CD8-positive, alpha-beta T cell (primary cell): ENCODE measurements at regions of chrX and their contacts with region 1.

Region 1: DNA sequence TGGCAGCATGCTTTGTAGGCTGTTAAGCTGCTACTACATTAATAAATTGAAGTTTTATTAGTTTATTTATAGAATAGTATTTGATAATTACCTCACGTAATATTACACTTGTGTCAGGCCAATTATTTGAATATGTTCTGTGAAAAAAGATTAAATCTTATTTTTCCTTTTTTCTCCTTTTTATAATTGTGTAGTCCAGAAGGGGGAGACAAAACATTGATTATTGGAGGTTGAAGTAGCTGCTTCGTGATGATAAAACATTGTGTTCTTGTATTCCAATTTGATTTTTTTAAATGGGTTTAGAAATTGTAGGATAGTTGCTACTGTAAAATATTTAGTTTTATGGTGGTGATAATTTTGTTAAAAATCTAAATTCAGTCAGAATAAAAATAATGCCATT is 85.7 kb downstream of the DIAPH2 start:
- DNase-seq: peak in 2 of 9 experiments; percentile 2 to 5
- ATAC-seq: no peak
- H3K4me3 ChIP-seq: no peak overlapping the region
- H3K4me3 Mint-ChIP-seq: no peak overlapping the region
- H3K27ac ChIP-seq: no peak overlapping the region
- H3K27ac Mint-ChIP-seq: no peak overlapping the region
- H3K4me1 ChIP-seq: no peaks in the 10 kb centered on the region
- H3K4me1 Mint-ChIP-seq: no peaks in the 10 kb centered on the region
- H3K27me3 ChIP-seq: no peaks in the 10 kb centered on the region
- H3K27me3 Mint-ChIP-seq: no peaks in the 10 kb centered on the region
- CTCF ChIP-seq: peak; percentile 40

Region 2: DNA sequence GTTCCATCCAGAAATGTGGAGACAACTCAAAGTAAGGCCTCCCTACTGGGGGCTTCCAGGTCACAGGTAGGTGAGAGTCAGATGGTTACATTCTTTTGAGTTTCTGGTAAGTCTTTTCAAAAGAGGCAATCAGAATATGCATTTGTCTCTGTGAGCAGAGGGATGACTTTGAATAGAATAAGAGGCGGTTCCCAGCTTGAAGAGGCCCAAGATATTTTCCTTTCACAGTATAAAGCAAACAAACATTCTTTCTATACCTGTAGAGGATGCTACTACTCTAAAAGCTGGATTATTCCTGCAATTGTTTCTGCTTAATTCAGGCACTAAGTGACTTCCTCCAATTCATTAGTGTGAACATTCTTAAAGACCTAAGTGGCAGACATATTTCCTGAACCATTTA is 41.3 kb before region 1 on chrX:
- CTCF ChIA-PET with region 1: no interaction called
- POLR2A ChIA-PET with region 1: no interaction called
- intact Hi-C with region 1: no loop called
- DNase-seq: no peak
- ATAC-seq: no peak
- H3K4me3 ChIP-seq: no peak overlapping the region
- H3K4me3 Mint-ChIP-seq: no peak overlapping the region
- H3K27ac ChIP-seq: no peak overlapping the region
- H3K27ac Mint-ChIP-seq: no peak overlapping the region
- H3K4me1 ChIP-seq: no peaks in the 10 kb centered on the region
- H3K4me1 Mint-ChIP-seq: no peaks in the 10 kb centered on the region
- H3K27me3 ChIP-seq: no peaks in the 10 kb centered on the region
- H3K27me3 Mint-ChIP-seq: no peaks in the 10 kb centered on the region
- CTCF ChIP-seq: no peak

Region 3: DNA sequence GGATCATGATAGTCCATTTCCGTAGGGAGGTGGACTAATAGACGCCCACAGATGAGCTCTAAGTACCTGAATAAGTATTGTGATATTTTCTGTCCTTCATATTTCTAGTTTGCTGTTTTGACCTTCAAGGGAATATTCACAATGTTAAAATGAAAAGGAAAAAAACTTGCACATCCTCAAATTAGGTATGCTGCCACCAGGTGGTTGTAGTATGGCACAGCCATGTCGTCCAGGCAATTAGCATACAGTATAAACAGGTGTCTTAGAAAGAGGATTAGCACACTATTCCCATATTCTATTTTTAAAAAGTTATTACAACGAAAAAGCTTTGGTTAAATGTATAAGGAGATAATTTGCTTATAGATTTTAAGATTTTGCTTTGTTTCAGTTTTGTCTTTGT is 915.4 kb after region 1 on chrX:
- CTCF ChIA-PET with region 1: no interaction called
- POLR2A ChIA-PET with region 1: no interaction called
- intact Hi-C with region 1: loop called (anchors 5 to 10 kb)
- DNase-seq: peak in 2 of 9 experiments; percentile 6 to 16
- ATAC-seq: no peak
- H3K4me3 ChIP-seq: no peak overlapping the region
- H3K4me3 Mint-ChIP-seq: no peak overlapping the region
- H3K27ac ChIP-seq: no peak overlapping the region
- H3K27ac Mint-ChIP-seq: no peak overlapping the region
- H3K4me1 ChIP-seq: no peaks in the 10 kb centered on the region
- H3K4me1 Mint-ChIP-seq: no peaks in the 10 kb centered on the region
- H3K27me3 ChIP-seq: no peaks in the 10 kb centered on the region
- H3K27me3 Mint-ChIP-seq: no peaks in the 10 kb centered on the region
- CTCF ChIP-seq: no peak